ENCODE measurements at regions of chr15 and their contacts with region 1.

Region 1: GRCh38 chr15:62060113-62060895 is at the start of gene VPS13C:
- DNase-seq: peak; percentile 98
- H3K4me3 ChIP-seq: peak within 1 kb of the TSS; percentile 90 to 99 (median 92)
- H3K27ac ChIP-seq: peak within 1 kb of the TSS; percentile 81
- H3K4me1 ChIP-seq: peaks cover 25% of the 10 kb centered on the region
- H3K27me3 ChIP-seq: no peaks in the 10 kb centered on the region
- CTCF ChIP-seq: peak; percentile 85 to 91
- POLR2A ChIP-seq: peak; percentile 80
- total RNA-seq, gene VPS13C: 57.5 and 60.3 TPM in 2 replicates

Region 2: GRCh38 chr15:61871926-61872522 is 188.3 kb before region 1 on chr15:
- CTCF ChIA-PET with region 1: interaction called, 12 read pairs
- POLR2A ChIA-PET with region 1: no interaction called
- dilution Hi-C with region 1: no loop called
- intact Hi-C with region 1: no loop called
- DNase-seq: peak; percentile 49
- H3K4me3 ChIP-seq: no peak overlapping the region
- H3K27ac ChIP-seq: no peak overlapping the region
- H3K4me1 ChIP-seq: no peaks in the 10 kb centered on the region
- H3K27me3 ChIP-seq: no peaks in the 10 kb centered on the region
- CTCF ChIP-seq: peak in 1 of 2 donors; percentile 31
- POLR2A ChIP-seq: no peak

Region 3: DNA sequence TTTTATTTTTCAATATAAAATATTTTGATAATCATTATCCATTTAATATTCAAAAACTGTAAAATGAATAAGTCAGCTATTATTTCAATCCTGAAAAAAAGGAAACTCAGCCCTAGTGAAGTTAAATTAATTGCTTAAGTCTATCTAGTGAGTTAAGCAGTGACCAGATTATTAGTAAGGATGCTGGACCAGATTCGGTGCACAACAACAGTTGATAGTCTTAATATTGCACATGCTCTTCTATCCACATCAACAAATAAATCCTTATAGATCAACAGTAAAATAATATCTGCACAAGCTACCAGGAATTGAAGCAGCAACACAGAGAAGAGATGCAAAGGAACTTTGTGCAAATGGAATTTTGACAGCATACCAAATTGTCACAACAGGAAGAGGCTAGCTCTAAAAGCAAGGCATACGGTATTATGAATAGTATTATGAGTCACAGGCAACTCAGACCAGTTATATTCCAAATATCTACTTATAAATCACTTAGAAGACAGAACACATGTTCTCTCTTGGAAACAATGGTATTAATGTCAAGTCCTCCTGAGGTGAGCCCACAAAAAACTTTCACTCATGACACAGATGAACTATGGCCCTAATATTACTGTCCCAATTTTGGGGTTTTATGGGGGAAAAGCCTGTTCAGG is 24.9 kb before region 1 on chr15:
- CTCF ChIA-PET with region 1: interaction called, 22 read pairs
- POLR2A ChIA-PET with region 1: no interaction called
- dilution Hi-C with region 1: no loop called
- intact Hi-C with region 1: no loop called
- DNase-seq: peak; percentile 74
- H3K4me3 ChIP-seq: no peak overlapping the region
- H3K27ac ChIP-seq: peak overlapping the region; percentile 21
- H3K4me1 ChIP-seq: peaks cover 17% of the 10 kb centered on the region
- H3K27me3 ChIP-seq: no peaks in the 10 kb centered on the region
- CTCF ChIP-seq: no peak
- POLR2A ChIP-seq: no peak

Region 4: GRCh38 chr15:62075595-62076282 is 15.4 kb after region 1 on chr15:
- CTCF ChIA-PET with region 1: interaction called, 27 read pairs
- POLR2A ChIA-PET with region 1: no interaction called
- dilution Hi-C with region 1: no loop called
- intact Hi-C with region 1: no loop called
- DNase-seq: no peak
- H3K4me3 ChIP-seq: no peak overlapping the region
- H3K27ac ChIP-seq: no peak overlapping the region
- H3K4me1 ChIP-seq: no peaks in the 10 kb centered on the region
- H3K27me3 ChIP-seq: no peaks in the 10 kb centered on the region
- CTCF ChIP-seq: no peak
- POLR2A ChIP-seq: no peak

Region 5: DNA sequence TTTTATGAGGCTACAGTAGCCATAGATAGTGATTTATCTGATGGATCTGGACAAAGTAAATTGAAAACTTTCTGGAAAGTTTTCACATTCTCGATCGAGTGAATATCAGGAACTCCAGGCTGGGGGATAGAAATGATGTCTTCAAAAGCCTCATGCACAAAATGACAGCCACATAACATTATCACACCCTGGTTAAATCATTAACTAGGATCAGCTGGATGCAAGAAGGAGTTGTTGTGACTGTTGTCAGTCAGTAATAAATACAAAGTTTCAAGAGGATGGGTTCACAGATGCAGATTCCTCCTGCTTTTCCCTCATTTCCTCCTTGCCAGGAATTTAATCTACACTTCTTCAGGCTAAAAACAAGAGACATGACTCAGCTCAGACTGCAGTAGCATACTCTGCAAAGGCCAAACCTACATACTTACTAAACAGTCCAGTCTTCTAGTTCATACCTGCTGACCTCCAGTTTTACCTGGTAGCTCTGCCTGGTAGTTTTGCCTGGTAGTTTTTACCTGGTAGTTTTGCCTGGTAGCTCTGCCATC is 47.3 kb after region 1 on chr15:
- CTCF ChIA-PET with region 1: no interaction called
- POLR2A ChIA-PET with region 1: no interaction called
- dilution Hi-C with region 1: no loop called
- intact Hi-C with region 1: no loop called
- DNase-seq: peak; percentile 65
- H3K4me3 ChIP-seq: no peak overlapping the region
- H3K27ac ChIP-seq: peak overlapping the region; percentile 12
- H3K4me1 ChIP-seq: peaks cover 31% of the 10 kb centered on the region
- H3K27me3 ChIP-seq: no peaks in the 10 kb centered on the region
- CTCF ChIP-seq: no peak
- POLR2A ChIP-seq: no peak

Region 6: GRCh38 chr15:62173215-62173614 is 112.9 kb after region 1 on chr15:
- CTCF ChIA-PET with region 1: interaction called, 5 read pairs
- POLR2A ChIA-PET with region 1: no interaction called
- dilution Hi-C with region 1: no loop called
- intact Hi-C with region 1: loop called (anchors 2 kb)
- DNase-seq: peak; percentile 97
- H3K4me3 ChIP-seq: peak overlapping the region in 2 of 3 experiments; percentile 10 to 68
- H3K27ac ChIP-seq: peak overlapping the region; percentile 100
- H3K4me1 ChIP-seq: peaks cover 42% of the 10 kb centered on the region
- H3K27me3 ChIP-seq: no peaks in the 10 kb centered on the region
- CTCF ChIP-seq: no peak
- POLR2A ChIP-seq: peak; percentile 51